Left ventricle myocardium superior (tissue), 1 donor: ENCODE measurements at regions of chr1 and their contacts with region 1.

Region 1: GRCh38 chr1:45490626-45491486 is at the start of gene TESK2:
- DNase-seq: peak; percentile 97
- ATAC-seq: peak; percentile 98
- total RNA-seq, gene TESK2: 1.9 TPM

Region 2: GRCh38 chr1:45011837-45012638 is 478.8 kb before region 1 on chr1 and contains the start of gene UROD:
- intact Hi-C with region 1: loop called (anchors 10 kb)
- DNase-seq: peak; percentile 93
- ATAC-seq: peak; percentile 94
- total RNA-seq, gene UROD: 84.8 TPM

Region 3: DNA sequence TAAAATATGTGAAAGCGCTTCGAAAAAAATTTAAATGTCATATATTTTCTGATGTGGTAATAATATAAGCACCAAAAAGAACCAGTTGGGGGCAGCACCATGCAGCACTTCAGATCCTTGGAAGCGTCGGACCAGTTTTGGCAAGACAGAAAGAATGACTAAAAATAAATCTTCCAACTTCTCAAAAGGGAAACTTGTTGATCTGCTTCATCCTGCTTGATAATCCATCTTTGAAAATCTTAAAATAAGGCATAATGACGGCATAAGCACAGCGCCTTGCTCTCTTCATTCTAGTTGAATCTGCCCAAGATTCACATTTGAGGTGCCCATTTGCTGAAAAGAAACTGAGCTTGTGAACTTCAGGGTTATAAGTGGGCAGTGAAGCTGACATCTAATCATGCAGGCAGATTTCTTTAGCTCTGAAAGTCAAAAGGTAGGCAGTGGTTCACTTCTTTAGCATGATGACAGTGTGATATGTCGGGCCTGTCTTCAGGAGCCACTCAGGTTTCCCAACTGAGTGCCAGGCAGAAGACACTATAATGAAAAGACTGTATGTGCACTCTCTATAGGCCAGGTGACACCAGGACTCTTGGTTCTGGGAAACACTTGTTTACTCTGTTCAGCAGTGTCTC is 130.9 kb before region 1 on chr1:
- intact Hi-C with region 1: loop called (anchors 5 kb)
- DNase-seq: peak; percentile 66
- ATAC-seq: peak; percentile 88